Posterior vena cava (tissue), 2 donors: ENCODE measurements at regions of chrX and their contacts with region 1.

Region 1: DNA sequence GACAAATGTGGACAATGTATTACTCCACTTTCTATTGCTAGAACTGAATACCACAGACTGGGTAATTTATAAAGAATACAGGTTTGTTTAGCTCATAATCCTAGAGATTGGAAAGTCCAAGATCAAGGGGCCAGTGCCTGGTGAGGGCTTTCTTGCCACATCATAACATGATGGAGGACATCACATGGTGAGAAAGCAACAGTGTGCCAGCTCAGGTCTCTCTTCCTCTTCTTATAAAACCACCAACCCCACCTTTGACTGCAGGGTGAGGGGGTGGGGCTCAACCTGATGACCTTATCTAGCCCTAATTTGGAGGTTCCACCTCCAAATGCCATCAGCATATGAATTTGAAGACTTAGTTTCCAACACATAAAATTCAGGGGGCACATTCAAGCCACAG is 105.7 kb upstream of the CXorf66 start:
- DNase-seq: no peak

Region 2: GRCh38 chrX:139506333-139506732 is 564.7 kb before region 1 on chrX:
- intact Hi-C with region 1: loop called in 1 of 2 experiments (anchors 5 kb)
- DNase-seq: no peak

Region 3: DNA sequence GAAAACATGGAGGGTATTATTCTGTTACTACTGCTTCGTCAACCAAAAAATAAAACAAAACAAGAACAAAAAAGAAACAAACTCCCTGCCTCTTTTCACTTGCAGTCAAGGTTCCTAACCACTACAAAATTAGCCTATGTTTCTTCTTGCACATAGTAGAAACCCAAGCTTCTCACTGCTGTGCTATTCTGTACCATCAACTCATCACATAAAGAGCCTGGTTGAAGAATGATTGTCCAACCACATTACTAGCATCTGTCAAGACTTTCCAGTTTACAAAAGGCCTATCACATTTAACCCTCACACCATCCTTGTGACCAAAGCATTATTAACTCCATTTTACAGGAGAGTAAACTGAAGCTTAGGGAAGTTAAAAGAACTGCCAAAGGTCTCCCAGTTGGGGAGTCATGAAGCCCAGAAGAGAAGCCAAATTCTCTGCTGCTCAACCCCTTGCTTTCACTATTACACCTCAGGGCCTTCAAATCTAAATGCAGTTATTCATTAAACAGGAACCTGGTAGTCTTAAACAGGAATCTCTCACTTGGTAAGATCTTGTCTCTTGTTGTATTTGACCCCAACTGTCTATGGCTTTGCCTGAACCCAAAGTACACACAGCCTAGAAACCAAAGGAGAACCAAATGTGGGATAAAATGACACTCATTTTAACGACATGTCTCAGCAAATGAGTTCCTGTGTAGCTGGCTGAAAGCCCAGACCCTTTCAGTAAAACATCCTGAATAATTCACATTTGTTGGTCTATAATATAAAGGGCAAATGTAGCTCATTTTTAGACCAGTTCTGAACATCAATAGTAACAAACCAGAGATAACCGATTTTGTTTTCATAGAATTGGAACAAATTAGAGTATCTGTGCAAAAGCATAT is 531.9 kb before region 1 on chrX:
- intact Hi-C with region 1: no loop called
- DNase-seq: no peak

Region 4: GRCh38 chrX:140104760-140105159 is 33.7 kb after region 1 on chrX:
- intact Hi-C with region 1: no loop called
- DNase-seq: no peak

Region 5: GRCh38 chrX:140141444-140142029 is 70.5 kb after region 1 on chrX:
- intact Hi-C with region 1: loop called in 1 of 2 experiments (anchors 2 kb)
- DNase-seq: no peak

Region 6: GRCh38 chrX:140589657-140590056 is 518.6 kb after region 1 on chrX:
- intact Hi-C with region 1: no loop called
- DNase-seq: no peak